Gastrocnemius medialis (tissue), 4 donors: ENCODE measurements at regions of chr19 and their contacts with region 1.

Region 1: GRCh38 chr19:57578487-57579205 is at the start of gene ZNF416:
- DNase-seq: peak; percentile 98
- ATAC-seq: peak; percentile 100
- H3K4me3 ChIP-seq: peak within 1 kb of the TSS; percentile 70 to 89 (median 80)
- H3K27ac ChIP-seq: peak within 1 kb of the TSS; percentile 48 to 81 (median 76)
- H3K4me1 ChIP-seq: peaks cover 14 to 20% of the 10 kb centered on the region in 2 donors
- H3K27me3 ChIP-seq: no peaks in the 10 kb centered on the region
- CTCF ChIP-seq: peak in 2 of 5 experiments; percentile 11 to 40
- POLR2A ChIP-seq: peak in 1 of 2 donors; percentile 20
- total RNA-seq, gene ZNF416: 0.87 to 2.0 (median 1.4) TPM

Region 2: DNA sequence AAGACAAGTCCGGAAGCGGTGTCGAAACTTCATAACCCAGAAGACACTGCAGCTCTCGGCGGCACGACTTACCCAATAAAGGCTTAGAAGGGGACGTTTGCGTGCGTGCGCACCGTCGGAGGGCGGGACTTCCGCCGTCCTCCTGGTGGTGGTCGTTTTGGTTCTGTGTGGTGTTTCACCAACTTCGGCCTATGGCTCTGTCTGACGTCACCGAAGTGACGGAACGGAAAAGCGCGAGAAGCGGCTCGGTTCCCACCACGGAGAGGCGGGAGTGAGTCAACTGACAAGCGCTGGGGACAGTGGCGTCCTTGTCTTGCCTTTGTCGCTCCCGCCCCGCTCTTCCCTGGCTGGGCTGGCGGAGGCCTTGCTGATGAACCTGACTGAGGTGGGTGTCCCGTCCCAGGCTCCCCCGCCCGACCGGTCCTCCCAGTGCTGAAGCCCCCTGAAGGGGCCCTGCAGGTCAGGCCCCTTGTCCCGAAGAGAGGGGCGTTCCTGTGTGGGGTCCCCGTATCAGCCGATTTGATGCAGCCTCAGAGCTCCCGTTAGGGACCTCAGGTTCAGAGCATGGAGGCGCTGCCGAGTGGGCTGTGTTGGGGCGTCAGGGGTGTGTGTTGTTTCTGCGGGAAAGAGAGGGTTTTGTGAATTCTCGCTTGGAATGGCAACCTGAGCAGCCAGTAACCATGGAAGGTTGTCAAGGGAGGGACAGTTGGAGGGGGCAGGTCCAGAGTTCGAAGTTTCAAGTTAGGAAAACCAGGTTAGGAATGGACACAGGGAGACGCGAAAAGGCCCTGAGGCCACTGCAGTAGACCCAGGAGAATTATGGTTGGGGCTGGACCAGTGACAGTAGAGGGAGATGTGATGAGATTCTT is 188.7 kb before region 1 on chr19 and contains the start of gene ZNF548:
- in situ Hi-C with region 1: no loop called
- intact Hi-C with region 1: loop called (anchors 1 kb)
- DNase-seq: peak; percentile 97 to 98
- ATAC-seq: peak; percentile 100
- H3K4me3 ChIP-seq: peak within 1 kb of the TSS; percentile 75 to 85 (median 81)
- H3K27ac ChIP-seq: peak within 1 kb of the TSS; percentile 87 to 98 (median 92)
- H3K4me1 ChIP-seq: peaks cover 22 to 26% of the 10 kb centered on the region in 2 donors
- H3K27me3 ChIP-seq: no peaks in the 10 kb centered on the region
- CTCF ChIP-seq: peak in 4 of 5 experiments; percentile 24 to 41 (median 33)
- POLR2A ChIP-seq: peak; percentile 70 to 78
- total RNA-seq, gene ZNF548: 6.1 to 10.4 (median 8.3) TPM

Region 3: DNA sequence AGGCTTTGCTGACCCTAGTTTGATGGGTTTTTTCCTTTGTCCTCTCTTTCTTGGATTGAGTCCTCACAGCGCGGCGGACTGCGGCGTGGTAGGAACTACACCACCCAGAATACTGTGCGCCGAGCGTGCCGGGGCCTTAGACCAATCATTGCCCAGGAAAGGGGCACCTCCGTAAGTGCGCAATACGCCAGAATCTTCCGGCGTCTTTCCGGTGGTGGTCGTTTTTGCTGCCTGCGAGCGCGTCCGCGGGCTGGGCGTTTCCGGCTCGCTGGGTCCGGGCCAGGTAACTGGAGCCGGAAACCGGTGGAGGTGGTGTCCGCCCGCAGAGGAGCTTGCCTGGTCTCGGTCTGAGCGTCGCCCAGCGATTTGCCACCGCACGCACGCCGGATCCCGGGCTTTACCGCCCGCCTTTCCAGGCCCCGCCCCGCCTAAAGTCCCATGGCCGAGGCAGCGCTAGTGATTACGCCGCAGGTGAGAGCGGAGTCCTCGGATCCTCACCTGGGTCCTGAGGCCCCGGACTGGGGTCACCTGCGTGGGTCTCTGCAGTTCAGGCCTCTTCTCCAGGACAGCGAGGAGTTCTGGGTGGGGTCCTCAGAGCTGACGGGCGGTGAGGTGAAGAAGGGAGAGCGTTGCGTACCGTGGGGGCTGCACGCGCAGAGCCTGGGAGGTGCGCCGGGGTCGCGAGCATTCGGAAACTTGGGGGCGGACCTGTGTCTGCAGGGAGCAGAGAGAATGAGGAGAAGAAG is 51.3 kb before region 1 on chr19 and contains the start of gene ZNF549:
- in situ Hi-C with region 1: no loop called
- intact Hi-C with region 1: loop called (anchors 1 kb)
- DNase-seq: peak; percentile 91 to 94
- ATAC-seq: peak; percentile 99 to 100
- H3K4me3 ChIP-seq: peak within 1 kb of the TSS; percentile 70 to 91 (median 88)
- H3K27ac ChIP-seq: peak within 1 kb of the TSS; percentile 80 to 90 (median 87)
- H3K4me1 ChIP-seq: peaks cover 8 to 13% of the 10 kb centered on the region in 2 donors
- H3K27me3 ChIP-seq: no peaks in the 10 kb centered on the region
- CTCF ChIP-seq: no peak
- POLR2A ChIP-seq: no peak
- total RNA-seq, gene ZNF549: 1.7 to 3.4 (median 2.3) TPM

Region 4: GRCh38 chr19:57599761-57600383 is 21.2 kb after region 1 on chr19 and contains the start of gene ZNF530:
- in situ Hi-C with region 1: no loop called
- intact Hi-C with region 1: loop called (anchors 1 kb)
- DNase-seq: peak; percentile 89 to 91
- ATAC-seq: peak; percentile 100
- H3K4me3 ChIP-seq: peak within 1 kb of the TSS; percentile 76 to 98 (median 79)
- H3K27ac ChIP-seq: peak within 1 kb of the TSS; percentile 22 to 70 (median 50)
- H3K4me1 ChIP-seq: peaks cover 7 to 9% of the 10 kb centered on the region in 2 donors
- H3K27me3 ChIP-seq: no peaks in the 10 kb centered on the region
- CTCF ChIP-seq: no peak
- POLR2A ChIP-seq: no peak
- total RNA-seq, gene ZNF530: 0.86 to 4.2 (median 3.4) TPM

Region 5: GRCh38 chr19:57632987-57633831 is 54.6 kb after region 1 on chr19 and contains the start of gene ZNF211:
- in situ Hi-C with region 1: loop called in 1 of 4 experiments (anchors 5 kb)
- intact Hi-C with region 1: loop called (anchors 1 kb)
- DNase-seq: peak; percentile 82 to 92
- ATAC-seq: peak; percentile 100
- H3K4me3 ChIP-seq: peak within 1 kb of the TSS; percentile 85 to 96 (median 92)
- H3K27ac ChIP-seq: peak within 1 kb of the TSS; percentile 79 to 86 (median 86)
- H3K4me1 ChIP-seq: peaks cover 7 to 13% of the 10 kb centered on the region in 2 donors
- H3K27me3 ChIP-seq: no peaks in the 10 kb centered on the region
- CTCF ChIP-seq: no peak
- POLR2A ChIP-seq: no peak
- total RNA-seq, gene ZNF211: 2.9 to 5.5 (median 4.3) TPM

Region 6: DNA sequence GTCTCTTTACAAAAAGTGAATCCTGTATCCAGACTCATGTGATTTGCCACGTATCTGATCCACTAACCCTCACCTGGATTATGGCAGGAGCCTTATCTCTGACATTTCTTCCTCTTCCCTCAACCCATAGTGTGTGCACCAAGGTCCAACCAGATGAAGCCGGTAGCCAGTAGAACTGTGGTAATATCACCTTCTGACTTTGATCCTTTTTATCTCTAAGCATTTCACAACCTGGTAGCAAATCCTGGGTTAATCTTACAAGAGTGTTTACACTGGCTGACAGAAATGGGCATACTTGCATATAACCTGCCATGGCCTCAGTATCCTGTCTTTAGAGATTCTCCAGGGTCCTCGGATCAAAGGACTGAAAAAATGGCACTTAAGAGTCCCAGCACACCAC is 335.9 kb after region 1 on chr19:
- in situ Hi-C with region 1: no loop called
- intact Hi-C with region 1: loop called (anchors 2 kb)
- DNase-seq: no peak
- ATAC-seq: no peak
- H3K4me3 ChIP-seq: no peak overlapping the region
- H3K27ac ChIP-seq: no peak overlapping the region
- H3K4me1 ChIP-seq: peaks cover 10 to 11% of the 10 kb centered on the region in 2 donors
- H3K27me3 ChIP-seq: no peaks in the 10 kb centered on the region
- CTCF ChIP-seq: no peak
- POLR2A ChIP-seq: no peak

Region 7: GRCh38 chr19:58002384-58003173 is 423.9 kb after region 1 on chr19 and contains the start of gene ZNF606:
- in situ Hi-C with region 1: no loop called
- intact Hi-C with region 1: loop called (anchors 2 kb)
- DNase-seq: peak; percentile 69 to 76
- ATAC-seq: peak; percentile 96 to 97
- H3K4me3 ChIP-seq: peak within 1 kb of the TSS; percentile 78 to 93 (median 88)
- H3K27ac ChIP-seq: peak within 1 kb of the TSS; percentile 77 to 88 (median 87)
- H3K4me1 ChIP-seq: peaks cover 14 to 20% of the 10 kb centered on the region in 2 donors
- H3K27me3 ChIP-seq: no peaks in the 10 kb centered on the region
- CTCF ChIP-seq: peak in 1 of 5 experiments; percentile 10
- POLR2A ChIP-seq: peak; percentile 50 to 65
- total RNA-seq, gene ZNF606: 2.9 to 15.3 (median 6.6) TPM